Testis (tissue), 5 donors: ENCODE measurements at regions of chr17 and their contacts with region 1.

Region 1: DNA sequence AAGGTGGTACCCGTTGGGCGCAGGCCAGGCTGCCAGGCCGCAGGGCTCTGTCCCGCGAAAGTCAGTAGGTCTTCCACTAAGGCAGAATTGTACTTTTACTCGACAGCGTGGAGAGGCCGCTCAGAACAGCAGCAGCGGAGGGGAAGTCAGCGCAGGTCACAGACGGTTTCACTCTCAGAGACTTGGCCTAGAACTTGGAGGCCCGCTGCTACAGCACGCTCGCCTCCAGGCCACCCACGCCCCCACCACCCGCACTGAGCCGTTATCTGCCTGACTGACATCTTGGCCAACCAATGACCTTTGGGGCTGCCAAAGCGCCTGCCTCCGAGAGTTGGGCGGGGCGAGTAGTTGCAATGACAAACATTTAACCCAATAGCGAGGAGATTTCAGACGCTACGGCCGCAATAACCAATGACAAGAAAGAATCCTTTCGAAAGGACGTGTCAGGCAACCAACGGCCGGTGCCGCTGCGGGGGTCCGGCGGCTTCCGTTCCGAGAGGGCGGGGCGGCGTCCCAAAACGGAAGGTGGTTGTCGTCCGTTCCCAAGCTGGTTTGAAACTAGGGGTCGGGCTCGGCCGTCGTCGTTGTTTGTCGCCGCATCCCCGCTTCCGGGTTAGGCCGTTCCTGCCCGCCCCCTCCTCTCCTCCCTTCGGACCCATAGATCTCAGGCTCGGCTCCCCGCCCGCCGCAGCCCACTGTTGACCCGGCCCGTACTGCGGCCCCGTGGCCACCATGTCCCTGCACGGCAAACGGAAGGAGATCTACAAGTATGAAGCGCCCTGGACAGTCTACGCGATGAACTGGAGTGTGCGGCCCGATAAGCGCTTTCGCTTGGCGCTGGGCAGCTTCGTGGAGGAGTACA is at the start of gene DCAF7:
- DNase-seq: peak; percentile 100
- H3K4me3 ChIP-seq: peak within 1 kb of the TSS; percentile 84 to 94
- H3K27ac ChIP-seq: peak within 1 kb of the TSS; percentile 90 to 92
- H3K4me1 ChIP-seq: peaks cover 18% of the 10 kb centered on the region
- H3K27me3 ChIP-seq: no peaks in the 10 kb centered on the region
- CTCF ChIP-seq: no peak
- POLR2A ChIP-seq: no peak
- total RNA-seq, gene DCAF7: 51.7 to 66.8 TPM

Region 2: GRCh38 chr17:63434876-63435684 is 115.1 kb before region 1 on chr17:
- intact Hi-C with region 1: loop called (anchors 10 kb)
- DNase-seq: peak; percentile 80
- H3K4me3 ChIP-seq: no peak overlapping the region
- H3K27ac ChIP-seq: peak overlapping the region in 1 of 2 donors; percentile 36
- H3K4me1 ChIP-seq: peaks cover 40% of the 10 kb centered on the region
- H3K27me3 ChIP-seq: no peaks in the 10 kb centered on the region
- CTCF ChIP-seq: no peak
- POLR2A ChIP-seq: no peak